Left cardiac atrium (tissue), 4 donors: ENCODE measurements at regions of chr9 and their contacts with region 1.

Region 1: GRCh38 chr9:13450723-13451122 is 171.2 kb upstream of the MPDZ start:
- DNase-seq: no peak
- ATAC-seq: peak in 1 of 2 donors; percentile 31

Region 2: GRCh38 chr9:13588151-13589033 is 137.7 kb after region 1 on chr9:
- intact Hi-C with region 1: loop called in 1 of 2 experiments (anchors 10 kb)
- DNase-seq: no peak
- ATAC-seq: peak; percentile 38 to 63

Region 3: GRCh38 chr9:13688994-13689600 is 238.4 kb after region 1 on chr9:
- intact Hi-C with region 1: loop called in 1 of 2 experiments (anchors 5 kb)
- DNase-seq: no peak
- ATAC-seq: no peak